ENCODE measurements at regions of chr12 and their contacts with region 1.

Region 1: DNA sequence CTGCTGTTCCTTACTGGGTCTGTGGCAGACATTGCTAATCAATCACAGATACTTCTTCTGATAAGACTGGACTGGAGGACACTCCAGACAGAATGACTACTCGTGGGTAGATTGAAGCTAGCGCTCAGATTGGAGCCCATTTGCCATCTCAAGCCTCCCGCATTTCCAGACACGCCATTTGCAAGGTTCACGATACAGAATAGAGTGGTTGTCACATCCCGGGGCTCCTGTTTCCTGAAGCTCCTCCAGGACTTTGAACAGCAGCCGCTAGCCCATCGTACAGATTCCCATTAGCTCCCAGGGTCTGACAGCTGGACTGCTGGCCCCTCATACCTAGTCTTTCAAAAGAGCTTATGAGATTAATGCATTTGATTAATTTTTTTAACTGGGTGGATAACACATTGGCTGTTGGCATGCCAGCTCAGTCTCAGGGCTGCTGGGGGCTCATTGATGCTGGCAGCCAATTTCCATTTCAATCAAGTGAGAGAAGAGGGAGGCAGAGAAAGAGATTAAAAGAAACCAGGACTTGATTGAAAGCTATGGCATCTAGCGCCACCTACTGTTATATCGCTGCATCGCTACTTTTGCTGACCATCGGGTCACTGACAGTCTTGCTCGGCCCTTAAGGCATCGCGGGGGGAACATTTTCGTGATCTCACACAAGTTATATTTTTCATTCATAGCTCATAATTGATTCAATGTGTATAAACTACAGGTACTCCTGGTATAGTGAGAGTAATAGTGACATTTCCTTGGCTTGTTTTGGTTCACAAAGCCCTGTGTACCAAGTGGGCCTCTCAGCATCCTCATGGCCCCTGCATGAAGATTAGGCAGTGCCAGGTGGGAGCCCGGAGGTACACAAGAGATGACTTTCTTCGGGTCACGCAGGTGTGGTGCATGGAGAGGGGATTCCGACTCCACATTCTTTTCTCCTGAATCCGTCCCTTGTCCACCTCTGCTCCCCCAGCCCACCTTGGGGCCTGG is 78.6 kb downstream of the CCDC60 start:
- DNase-seq: peak; percentile 59 to 73 (median 65)
- ATAC-seq: peak; percentile 52
- H3K4me3 ChIP-seq: no peak overlapping the region
- H3K27ac ChIP-seq: no peak overlapping the region
- H3K4me1 ChIP-seq: no peaks in the 10 kb centered on the region
- H3K27me3 ChIP-seq: no peaks in the 10 kb centered on the region
- CTCF ChIP-seq: peak; percentile 32 to 85 (median 75)
- POLR2A ChIP-seq: no peak

Region 2: GRCh38 chr12:119115296-119115905 is 297.7 kb before region 1 on chr12:
- intact Hi-C with region 1: loop called (anchors 10 kb)
- DNase-seq: peak; percentile 13 to 48 (median 27)
- ATAC-seq: no peak
- H3K4me3 ChIP-seq: no peak overlapping the region
- H3K27ac ChIP-seq: no peak overlapping the region
- H3K4me1 ChIP-seq: peaks cover 5% of the 10 kb centered on the region
- H3K27me3 ChIP-seq: no peaks in the 10 kb centered on the region
- CTCF ChIP-seq: peak; percentile 64 to 94 (median 73)
- POLR2A ChIP-seq: no peak

Region 3: GRCh38 chr12:119570771-119571170 is 157.7 kb after region 1 on chr12:
- intact Hi-C with region 1: no loop called
- DNase-seq: no peak
- ATAC-seq: no peak
- H3K4me3 ChIP-seq: no peak overlapping the region
- H3K27ac ChIP-seq: no peak overlapping the region
- H3K4me1 ChIP-seq: no peaks in the 10 kb centered on the region
- H3K27me3 ChIP-seq: no peaks in the 10 kb centered on the region
- CTCF ChIP-seq: no peak
- POLR2A ChIP-seq: no peak